Heart right ventricle (tissue), 16 donors: ENCODE measurements at regions of chr10 and their contacts with region 1.

Region 1: GRCh38 chr10:60434418-60435046 is 44.9 kb upstream of the ANK3 start:
- DNase-seq: peak in 1 of 2 donors; percentile 40
- ATAC-seq: peak in 7 of 8 donors; percentile 62 to 81 (median 72)
- H3K4me3 ChIP-seq: no peak overlapping the region
- H3K27ac ChIP-seq: no peak overlapping the region
- H3K4me1 ChIP-seq: peaks cover 0 to 22% (median 8%) of the 10 kb centered on the region in 9 donors
- H3K27me3 ChIP-seq: no peaks in the 10 kb centered on the region
- CTCF ChIP-seq: peak; percentile 37 to 80 (median 74)

Region 2: GRCh38 chr10:60099998-60100747 is 334.4 kb before region 1 on chr10:
- intact Hi-C with region 1: loop called (anchors 2 to 10 kb)
- DNase-seq: peak in 1 of 2 donors; percentile 9
- ATAC-seq: peak in 7 of 8 donors; percentile 25 to 75 (median 56)
- H3K4me3 ChIP-seq: no peak overlapping the region
- H3K27ac ChIP-seq: no peak overlapping the region
- H3K4me1 ChIP-seq: peaks cover 0 to 4% (median 0%) of the 10 kb centered on the region in 9 donors
- H3K27me3 ChIP-seq: no peaks in the 10 kb centered on the region
- CTCF ChIP-seq: peak in 8 of 9 donors; percentile 36 to 72 (median 64)

Region 3: DNA sequence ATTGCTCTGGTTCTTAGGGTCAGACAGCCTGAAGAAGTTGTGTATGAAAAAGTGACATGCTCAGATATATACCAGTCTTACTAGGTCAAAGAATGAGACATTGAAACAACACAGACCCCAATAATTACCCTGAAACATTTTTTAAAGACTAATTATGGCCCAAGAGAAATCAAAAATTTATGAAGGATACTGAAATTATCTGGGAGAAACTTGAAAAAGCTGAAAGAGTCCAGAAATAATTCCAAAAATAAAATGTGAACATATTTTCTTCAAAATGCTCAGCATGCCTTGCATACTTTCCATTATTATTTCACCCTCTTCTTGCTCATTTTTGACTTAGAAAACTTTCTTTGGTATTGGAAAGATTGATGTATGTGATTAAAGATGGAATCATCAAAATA is 329.2 kb before region 1 on chr10:
- intact Hi-C with region 1: loop called in 9 of 10 experiments (anchors 2 to 10 kb)
- DNase-seq: no peak
- ATAC-seq: no peak
- H3K4me3 ChIP-seq: no peak overlapping the region
- H3K27ac ChIP-seq: no peak overlapping the region
- H3K4me1 ChIP-seq: peaks cover 0 to 6% (median 0%) of the 10 kb centered on the region in 9 donors
- H3K27me3 ChIP-seq: no peaks in the 10 kb centered on the region
- CTCF ChIP-seq: no peak

Region 4: GRCh38 chr10:60114765-60115586 is 319.6 kb before region 1 on chr10:
- intact Hi-C with region 1: loop called in 2 of 10 experiments (anchors 5 kb)
- DNase-seq: no peak
- ATAC-seq: peak in 4 of 8 donors; percentile 51 to 74 (median 62)
- H3K4me3 ChIP-seq: no peak overlapping the region
- H3K27ac ChIP-seq: no peak overlapping the region
- H3K4me1 ChIP-seq: peaks cover 0 to 8% (median 2%) of the 10 kb centered on the region in 9 donors
- H3K27me3 ChIP-seq: no peaks in the 10 kb centered on the region
- CTCF ChIP-seq: peak in 8 of 9 donors; percentile 4 to 65 (median 56)

Region 5: GRCh38 chr10:60208676-60209269 is 225.8 kb before region 1 on chr10:
- intact Hi-C with region 1: loop called in 9 of 10 experiments (anchors 2 to 10 kb)
- DNase-seq: no peak
- ATAC-seq: peak in 1 of 8 donors; percentile 25
- H3K4me3 ChIP-seq: no peak overlapping the region
- H3K27ac ChIP-seq: no peak overlapping the region
- H3K4me1 ChIP-seq: peaks cover 0 to 10% (median 3%) of the 10 kb centered on the region in 9 donors
- H3K27me3 ChIP-seq: no peaks in the 10 kb centered on the region
- CTCF ChIP-seq: peak; percentile 19 to 73 (median 63)

Region 6: GRCh38 chr10:60237977-60238758 is 196.4 kb before region 1 on chr10:
- intact Hi-C with region 1: loop called in 7 of 10 experiments (anchors 1 to 10 kb)
- DNase-seq: peak in 1 of 2 donors; percentile 22
- ATAC-seq: peak; percentile 53 to 86 (median 76)
- H3K4me3 ChIP-seq: peak overlapping the region in 2 of 10 donors; percentile 19 to 25
- H3K27ac ChIP-seq: peak overlapping the region in 9 of 10 donors; percentile 18 to 81 (median 74)
- H3K4me1 ChIP-seq: peaks cover 0 to 41% (median 14%) of the 10 kb centered on the region in 9 donors
- H3K27me3 ChIP-seq: no peaks in the 10 kb centered on the region
- CTCF ChIP-seq: peak in 7 of 9 donors; percentile 11 to 54 (median 35)

Region 7: DNA sequence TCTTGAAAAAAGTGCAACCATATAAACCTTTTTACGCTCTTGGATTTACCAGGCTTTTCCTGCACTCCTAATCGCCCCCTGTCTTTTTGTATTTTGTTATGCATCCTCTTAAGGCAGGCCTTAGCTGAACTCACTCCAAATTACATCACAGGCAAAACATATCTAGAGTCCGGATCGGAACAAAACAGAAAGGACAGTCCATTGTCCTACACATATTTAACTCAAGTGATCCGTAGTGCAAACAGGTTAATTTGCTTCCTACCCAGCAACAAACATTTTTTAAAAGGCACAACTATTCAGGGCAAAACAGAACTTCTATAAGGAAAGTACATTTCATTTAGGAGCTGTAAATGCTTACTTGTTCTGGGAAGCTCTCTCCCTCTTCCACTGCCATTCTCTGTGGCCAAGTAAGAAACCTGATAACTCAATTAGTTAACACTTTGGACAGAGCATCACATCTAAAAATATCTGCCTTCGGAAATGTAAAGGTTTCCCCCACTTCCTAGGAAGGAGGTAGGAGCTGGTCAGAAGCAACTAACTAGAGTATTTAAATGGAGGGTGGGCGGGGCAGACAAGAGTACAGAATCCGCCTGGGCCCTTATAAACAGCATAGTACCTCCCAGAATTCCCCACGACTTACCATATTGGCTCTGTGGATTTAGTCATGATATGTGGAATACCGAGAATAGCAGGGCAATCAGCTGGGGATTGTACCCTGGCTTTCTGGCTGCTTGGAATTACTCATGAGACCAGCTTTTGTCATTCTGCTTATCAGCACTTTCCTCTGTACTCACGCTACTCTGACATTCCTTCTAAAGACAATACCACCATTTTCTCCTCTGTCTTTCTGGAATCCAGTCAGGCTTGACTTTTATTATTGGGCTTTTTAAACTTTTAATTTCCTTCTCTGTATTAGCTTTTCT is 134.3 kb before region 1 on chr10:
- intact Hi-C with region 1: loop called in 2 of 10 experiments (anchors 10 kb)
- DNase-seq: peak in 1 of 2 donors; percentile 59
- ATAC-seq: peak; percentile 75 to 93 (median 90)
- H3K4me3 ChIP-seq: peak overlapping the region; percentile 1 to 59 (median 49)
- H3K27ac ChIP-seq: peak overlapping the region; percentile 36 to 86 (median 74)
- H3K4me1 ChIP-seq: peaks cover 0 to 27% (median 6%) of the 10 kb centered on the region in 9 donors
- H3K27me3 ChIP-seq: no peaks in the 10 kb centered on the region
- CTCF ChIP-seq: peak in 6 of 9 donors; percentile 9 to 43 (median 30)

Region 8: GRCh38 chr10:60576130-60577069 is 141.9 kb after region 1 on chr10:
- intact Hi-C with region 1: no loop called
- DNase-seq: no peak
- ATAC-seq: peak in 7 of 8 donors; percentile 40 to 79 (median 67)
- H3K4me3 ChIP-seq: peak overlapping the region in 7 of 10 donors; percentile 3 to 37 (median 23)
- H3K27ac ChIP-seq: peak overlapping the region in 8 of 10 donors; percentile 11 to 73 (median 60)
- H3K4me1 ChIP-seq: peaks cover 0 to 19% (median 8%) of the 10 kb centered on the region in 9 donors
- H3K27me3 ChIP-seq: no peaks in the 10 kb centered on the region
- CTCF ChIP-seq: no peak